ENCODE measurements at regions of chr2 and their contacts with region 1.

Region 1: GRCh38 chr2:112048887-112049286 is 6.2 kb upstream of the TMEM87B start:
- DNase-seq: no peak
- ATAC-seq: peak; percentile 74

Region 2: GRCh38 chr2:111883661-111884591 is 165.0 kb before region 1 on chr2 and contains the start of gene ANAPC1:
- intact Hi-C with region 1: loop called (anchors 1 kb)
- DNase-seq: peak; percentile 96
- ATAC-seq: peak; percentile 98
- total RNA-seq, gene ANAPC1: 18.6 TPM

Region 3: GRCh38 chr2:112010751-112011150 is 38.1 kb before region 1 on chr2:
- intact Hi-C with region 1: no loop called
- DNase-seq: no peak
- ATAC-seq: peak; percentile 26

Region 4: GRCh38 chr2:112138159-112138773 is 89.4 kb after region 1 on chr2 and contains the start of gene FBLN7:
- intact Hi-C with region 1: no loop called
- DNase-seq: no peak
- ATAC-seq: no peak
- total RNA-seq, gene FBLN7: 0.54 TPM